Activated CD4-positive, alpha-beta memory T cell treated with anti-CD3 and anti-CD28 coated beads, Interleukin-2, amount 10 ng/mL, durations not matched to agents 7 days and 5 days (primary cell): ENCODE measurements at regions of chr11 and their contacts with region 1.

Region 1: GRCh38 chr11:14454861-14455632 is 44.6 kb downstream of the COPB1 start:
- DNase-seq: no peak
- H3K4me3 Mint-ChIP-seq: no peak overlapping the region
- H3K27ac Mint-ChIP-seq: no peak overlapping the region
- H3K4me1 Mint-ChIP-seq: peaks cover 3% of the 10 kb centered on the region
- H3K27me3 Mint-ChIP-seq: no peaks in the 10 kb centered on the region

Region 2: GRCh38 chr11:14288189-14288935 is 166.7 kb before region 1 on chr11:
- CTCF ChIA-PET with region 1: interaction called, 15 read pairs
- POLR2A ChIA-PET with region 1: no interaction called
- DNase-seq: no peak
- H3K4me3 Mint-ChIP-seq: peak overlapping the region; percentile 52
- H3K27ac Mint-ChIP-seq: peak overlapping the region; percentile 91
- H3K4me1 Mint-ChIP-seq: peaks cover 41% of the 10 kb centered on the region
- H3K27me3 Mint-ChIP-seq: no peaks in the 10 kb centered on the region

Region 3: DNA sequence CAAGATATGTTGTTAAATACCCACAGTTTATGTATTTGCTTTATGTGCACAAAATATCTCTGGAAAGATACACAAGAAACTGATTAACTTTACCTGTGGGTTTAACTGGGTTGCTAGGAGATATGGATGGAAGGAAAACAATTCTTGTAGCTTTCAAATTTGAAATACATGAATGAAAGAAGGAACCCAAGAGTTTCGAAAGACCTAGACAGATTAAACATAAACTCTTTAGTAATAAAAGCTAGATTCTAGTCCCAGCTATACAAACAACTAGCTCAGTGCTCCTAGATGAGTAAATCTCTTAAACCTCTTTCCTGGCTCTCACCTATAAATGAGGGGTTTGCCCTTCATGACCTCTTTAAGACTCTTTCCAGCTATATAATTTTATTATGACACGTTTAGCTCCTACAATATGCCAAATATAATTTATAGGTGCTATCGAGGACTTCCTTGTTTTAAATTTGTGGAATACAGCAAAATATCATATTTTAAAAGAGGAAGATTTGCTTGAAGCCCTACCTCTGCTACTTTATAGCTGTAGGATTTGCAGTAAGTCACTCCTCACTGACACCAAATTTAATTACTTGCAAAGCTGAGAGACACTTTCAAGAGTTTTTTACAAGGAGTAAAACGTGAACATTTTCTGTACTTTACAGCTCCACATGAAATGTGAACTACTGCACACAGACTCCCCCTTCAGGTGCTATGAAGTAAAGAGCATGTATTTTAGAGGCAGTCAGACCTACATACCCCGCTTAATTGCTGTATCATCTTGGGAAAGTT is 146.7 kb before region 1 on chr11:
- CTCF ChIA-PET with region 1: interaction called, 146 read pairs
- POLR2A ChIA-PET with region 1: interaction called, 3 read pairs
- DNase-seq: no peak
- H3K4me3 Mint-ChIP-seq: no peak overlapping the region
- H3K27ac Mint-ChIP-seq: no peak overlapping the region
- H3K4me1 Mint-ChIP-seq: peaks cover 21% of the 10 kb centered on the region
- H3K27me3 Mint-ChIP-seq: no peaks in the 10 kb centered on the region

Region 4: GRCh38 chr11:14435717-14436512 is 19.1 kb before region 1 on chr11:
- CTCF ChIA-PET with region 1: interaction called, 12 read pairs
- POLR2A ChIA-PET with region 1: interaction called, 3 read pairs
- DNase-seq: peak; percentile 51
- H3K4me3 Mint-ChIP-seq: no peak overlapping the region
- H3K27ac Mint-ChIP-seq: peak overlapping the region; percentile 48
- H3K4me1 Mint-ChIP-seq: peaks cover 43% of the 10 kb centered on the region
- H3K27me3 Mint-ChIP-seq: peaks cover 9% of the 10 kb centered on the region